ENCODE measurements at regions of chr11 and their contacts with region 1.

Region 1: DNA sequence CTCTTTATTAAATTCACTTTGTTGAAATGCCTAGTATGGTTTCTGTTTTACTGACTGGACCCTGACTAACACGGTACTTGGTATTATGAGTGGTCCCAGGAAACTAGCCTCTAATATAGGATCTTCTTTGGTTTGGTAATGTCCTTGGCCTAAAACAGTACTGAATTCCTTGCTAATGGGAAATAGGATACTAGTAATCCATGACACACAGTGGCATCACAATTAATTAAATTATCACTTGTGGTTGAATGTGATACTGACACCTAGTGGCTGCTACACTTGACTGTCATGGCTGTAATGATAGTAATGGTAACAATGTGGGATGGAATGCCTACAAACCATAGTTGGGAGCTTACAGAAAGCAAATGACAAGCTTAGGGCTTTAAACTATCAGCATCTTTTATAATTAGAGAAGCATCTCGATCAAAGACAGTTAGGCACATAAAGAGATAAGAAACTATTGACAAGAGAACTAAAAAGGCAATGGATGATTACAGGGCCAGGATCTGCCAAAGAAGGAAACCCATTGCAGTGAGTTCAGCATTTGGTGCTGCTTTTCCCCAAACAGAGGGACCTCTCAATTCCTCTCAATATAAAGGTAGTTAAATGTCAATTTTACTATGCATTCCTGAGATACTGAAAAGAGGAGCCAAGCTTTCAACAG is 8.6 kb downstream of the DNHD1 start:
- DNase-seq: peak; percentile 43 to 54
- ATAC-seq: peak; percentile 72 to 87; a peak in 5 of 6 replicates
- H3K4me3 ChIP-seq: no peak overlapping the region
- H3K27ac ChIP-seq: no peak overlapping the region
- H3K4me1 ChIP-seq: no peaks in the 10 kb centered on the region
- CTCF ChIP-seq: peak; percentile 85
- EP300 ChIP-seq: no peak
- POLR2A ChIP-seq: no peak
- RAD21 ChIP-seq: peak; percentile 55 to 60

Region 2: GRCh38 chr11:6389921-6390724 is 115.6 kb before region 1 on chr11 and contains the start of gene SMPD1:
- CTCF ChIA-PET with region 1: interaction called, 23 read pairs
- POLR2A ChIA-PET with region 1: no interaction called
- DNase-seq: peak; percentile 82
- ATAC-seq: peak; percentile 90 to 94
- H3K4me3 ChIP-seq: peak within 1 kb of the TSS; percentile 51
- H3K27ac ChIP-seq: peak within 1 kb of the TSS; percentile 77 to 87
- H3K4me1 ChIP-seq: peaks cover 32% of the 10 kb centered on the region
- CTCF ChIP-seq: no peak
- EP300 ChIP-seq: no peak
- POLR2A ChIP-seq: 0 out of 2 replicates have a peak, but pooled peaks have one; percentile 31
- RAD21 ChIP-seq: no peak
- polyA plus RNA-seq, gene SMPD1: 5.1 and 5.5 TPM in 2 replicates

Region 3: DNA sequence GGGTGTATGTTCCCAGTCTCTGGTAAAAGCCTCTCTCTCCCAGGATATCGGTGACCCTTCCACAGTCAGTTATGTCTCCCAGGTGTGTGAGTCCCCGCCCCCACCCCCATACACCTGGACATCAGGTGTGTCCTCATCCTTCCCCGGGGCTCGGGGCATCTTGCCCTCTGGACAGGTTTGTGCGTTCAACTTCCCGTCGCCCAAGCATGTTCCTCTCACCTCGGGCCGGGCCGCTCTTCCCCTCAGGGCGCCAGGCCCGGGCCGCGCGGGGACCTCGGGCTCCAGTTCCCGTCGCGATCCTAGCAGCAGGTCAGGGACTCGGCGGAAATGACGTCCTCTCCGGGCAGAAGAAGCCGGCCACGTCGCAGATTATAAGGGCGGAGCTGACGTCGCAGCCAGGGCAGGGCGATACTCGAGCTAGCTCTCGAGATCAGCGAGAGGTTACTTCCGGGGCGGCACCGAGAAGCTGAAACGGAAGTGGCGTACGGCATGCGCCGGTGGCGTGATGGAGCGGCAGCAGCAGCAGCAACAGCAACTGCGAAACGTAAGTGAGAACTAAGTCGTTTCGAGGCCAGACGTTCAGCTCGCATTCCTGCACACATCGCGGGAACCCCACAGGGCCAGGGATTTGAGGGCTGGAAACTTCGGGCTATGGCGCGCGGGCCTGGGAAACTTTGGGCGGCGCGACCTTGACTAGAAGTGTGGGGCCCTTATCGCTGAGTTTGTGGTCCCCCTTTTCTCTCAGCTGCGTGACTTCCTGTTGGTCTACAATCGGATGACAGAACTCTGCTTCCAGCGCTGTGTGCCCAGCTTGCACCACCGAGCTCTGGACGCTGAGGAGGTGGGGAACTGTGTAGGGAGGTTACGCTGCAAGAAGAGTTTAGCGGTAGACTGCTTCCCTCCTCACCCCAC is 24.4 kb before region 1 on chr11 and contains the starts of genes ARFIP2 and TIMM10B:
- CTCF ChIA-PET with region 1: interaction called, 15 read pairs
- POLR2A ChIA-PET with region 1: interaction called, 3 read pairs
- DNase-seq: peak; percentile 97 to 99
- ATAC-seq: peak; percentile 97 to 99
- H3K4me3 ChIP-seq: peak within 1 kb of the TSS; percentile 90
- H3K27ac ChIP-seq: peak within 1 kb of the TSS; percentile 86 to 94
- H3K4me1 ChIP-seq: peaks cover 25% of the 10 kb centered on the region
- CTCF ChIP-seq: no peak
- EP300 ChIP-seq: no peak
- POLR2A ChIP-seq: peak; percentile 86
- RAD21 ChIP-seq: no peak
- polyA plus RNA-seq, gene ARFIP2: 87.9 and 88.5 TPM in 2 replicates
- polyA plus RNA-seq, gene TIMM10B: 31.6 and 35.6 TPM in 2 replicates

Region 4: DNA sequence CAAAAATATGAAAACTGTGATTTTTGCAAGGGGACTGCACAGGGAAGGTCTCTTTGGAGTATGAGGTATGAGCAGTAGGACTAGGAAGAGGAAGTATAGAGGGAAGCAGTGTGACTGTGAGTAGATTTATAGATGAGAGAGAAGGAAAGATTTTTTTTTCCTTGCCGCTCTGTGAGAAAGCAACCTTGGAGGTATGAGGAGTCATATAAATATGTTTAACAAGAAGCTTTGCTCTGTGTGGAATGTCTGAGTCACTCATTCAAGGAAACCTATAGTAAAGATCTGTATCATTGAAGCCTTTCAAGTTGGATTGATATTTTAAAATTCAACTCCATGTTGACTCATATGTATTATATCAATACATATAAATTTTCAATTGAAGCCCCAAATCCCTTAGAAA is 17.5 kb after region 1 on chr11:
- CTCF ChIA-PET with region 1: interaction called, 15 read pairs
- POLR2A ChIA-PET with region 1: no interaction called
- DNase-seq: peak in 1 of 2 experiments; percentile 31
- ATAC-seq: peak; percentile 55 to 72; a peak in 5 of 6 replicates
- H3K4me3 ChIP-seq: no peak overlapping the region
- H3K27ac ChIP-seq: no peak overlapping the region
- H3K4me1 ChIP-seq: peaks cover 7% of the 10 kb centered on the region; the same call in 1 of the 3 replicates
- CTCF ChIP-seq: no peak
- EP300 ChIP-seq: no peak
- POLR2A ChIP-seq: no peak
- RAD21 ChIP-seq: no peak

Region 5: GRCh38 chr11:6544921-6545850 is 39.5 kb after region 1 on chr11:
- CTCF ChIA-PET with region 1: interaction called, 10 read pairs
- POLR2A ChIA-PET with region 1: no interaction called
- DNase-seq: no peak
- ATAC-seq: peak in 1 of 2 experiments; percentile 21; a peak in 2 of 6 replicates
- H3K4me3 ChIP-seq: no peak overlapping the region
- H3K27ac ChIP-seq: no peak overlapping the region
- H3K4me1 ChIP-seq: no peaks in the 10 kb centered on the region
- CTCF ChIP-seq: no peak
- EP300 ChIP-seq: no peak
- POLR2A ChIP-seq: no peak
- RAD21 ChIP-seq: no peak

Measured in A549 (cell line).